ENCODE measurements at regions of chr1 and their contacts with region 1.

Region 1: DNA sequence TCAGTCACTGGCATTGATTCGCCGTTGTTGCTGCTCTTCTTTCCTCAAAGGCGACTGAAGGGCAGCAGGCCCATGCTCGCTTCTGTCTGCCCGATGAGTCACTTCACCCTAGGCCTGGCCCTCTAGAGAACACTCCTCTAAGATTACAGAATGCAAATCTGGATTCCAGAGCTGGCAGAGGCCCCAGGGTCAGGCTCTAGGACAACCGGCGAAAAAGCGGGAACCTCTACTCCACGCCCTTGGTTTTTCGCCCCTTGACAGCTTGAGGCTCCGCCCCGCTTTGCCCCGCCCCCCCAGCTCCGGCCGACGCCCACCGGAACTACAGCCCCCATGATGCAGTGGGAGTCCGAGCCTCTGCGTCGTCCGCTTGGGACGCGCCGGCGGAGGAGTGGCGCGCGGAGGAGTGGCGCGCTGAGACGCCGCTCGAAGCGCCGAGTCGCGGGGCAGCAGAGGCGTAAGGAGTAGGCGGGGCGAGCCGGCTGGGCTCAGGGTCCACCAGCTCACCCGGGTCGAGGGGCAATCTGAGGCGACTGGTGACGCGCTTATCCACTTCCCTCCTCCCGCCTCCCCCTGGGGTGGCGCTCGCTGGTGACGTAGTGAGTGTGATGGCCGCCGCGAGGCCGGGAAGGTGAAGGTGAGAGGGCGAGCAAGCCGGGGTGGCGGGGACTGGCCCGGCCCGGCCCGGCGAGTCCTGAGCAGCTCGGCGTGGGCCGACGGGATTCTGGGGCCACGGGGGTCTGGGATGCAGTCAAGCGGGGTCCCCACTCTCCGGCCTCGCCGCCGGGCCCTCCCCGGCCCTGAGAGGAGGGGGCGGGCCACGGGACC is at the start of gene MFN2:
- DNase-seq: peak; percentile 98
- ATAC-seq: peak; percentile 97
- H3K4me3 ChIP-seq: peak within 1 kb of the TSS; percentile 61 to 74
- H3K27ac ChIP-seq: peak within 1 kb of the TSS; percentile 32 to 61
- H3K4me1 ChIP-seq: no peaks in the 10 kb centered on the region
- H3K27me3 ChIP-seq: no peaks in the 10 kb centered on the region
- total RNA-seq, gene MFN2: 57.1 TPM

Region 2: GRCh38 chr1:11918779-11919519 is 61.1 kb before region 1 on chr1:
- intact Hi-C with region 1: loop called in 1 of 2 experiments (anchors 10 kb)
- DNase-seq: peak; percentile 91 to 92
- ATAC-seq: peak; percentile 84
- H3K4me3 ChIP-seq: no peak overlapping the region
- H3K27ac ChIP-seq: peak overlapping the region; percentile 46 to 97
- H3K4me1 ChIP-seq: peaks cover 0 to 2% of the 10 kb centered on the region in 2 donors
- H3K27me3 ChIP-seq: no peaks in the 10 kb centered on the region

Region 3: DNA sequence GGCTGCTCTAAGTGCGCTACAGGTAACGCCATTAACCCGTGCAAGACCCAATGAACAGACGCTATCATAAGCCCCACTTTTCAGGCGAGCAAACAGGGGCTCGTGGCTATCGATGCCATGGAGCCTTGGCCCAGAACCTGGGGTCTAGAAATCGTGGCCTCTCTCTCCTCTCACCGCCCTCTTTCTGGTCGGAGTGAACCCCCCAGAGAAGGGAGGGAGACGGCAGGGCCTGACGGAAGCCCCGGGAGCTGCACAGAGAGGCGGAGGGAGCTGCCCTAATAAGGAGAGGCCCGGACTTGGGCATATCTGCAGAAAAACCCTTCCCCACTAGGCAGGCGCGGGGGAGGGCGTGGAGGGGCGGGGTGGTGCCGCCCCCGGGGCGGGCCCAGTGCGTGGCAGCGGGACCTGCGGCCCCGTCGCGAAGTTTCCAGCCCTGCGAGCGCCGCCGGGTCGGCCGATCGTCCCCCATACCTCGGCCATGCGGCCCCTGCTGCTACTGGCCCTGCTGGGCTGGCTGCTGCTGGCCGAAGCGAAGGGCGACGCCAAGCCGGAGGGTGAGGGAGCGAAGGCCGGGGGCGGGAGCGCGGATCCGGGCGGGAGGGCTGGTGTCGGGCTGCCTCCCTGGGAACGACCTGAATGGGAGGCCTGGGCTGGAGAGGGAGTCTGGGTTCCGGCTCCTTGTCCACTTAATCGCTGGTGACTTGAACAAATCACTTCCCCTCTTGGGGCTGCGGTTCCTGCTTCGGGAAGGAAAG is 45.6 kb before region 1 on chr1 and contains the start of gene PLOD1:
- intact Hi-C with region 1: loop called in 1 of 2 experiments (anchors 5 kb)
- DNase-seq: peak; percentile 96 to 97
- ATAC-seq: peak; percentile 96
- H3K4me3 ChIP-seq: peak within 1 kb of the TSS; percentile 46 to 65
- H3K27ac ChIP-seq: peak within 1 kb of the TSS in 1 of 2 donors; percentile 89
- H3K4me1 ChIP-seq: peaks cover 0 to 2% of the 10 kb centered on the region in 2 donors
- H3K27me3 ChIP-seq: no peaks in the 10 kb centered on the region
- total RNA-seq, gene PLOD1: 80.2 to 95.9 TPM